Activated CD8-positive, alpha-beta T cell treated with anti-CD3 and anti-CD28 coated beads for 36 hours (primary cell): ENCODE measurements at regions of chr17 and their contacts with region 1.

Region 1: DNA sequence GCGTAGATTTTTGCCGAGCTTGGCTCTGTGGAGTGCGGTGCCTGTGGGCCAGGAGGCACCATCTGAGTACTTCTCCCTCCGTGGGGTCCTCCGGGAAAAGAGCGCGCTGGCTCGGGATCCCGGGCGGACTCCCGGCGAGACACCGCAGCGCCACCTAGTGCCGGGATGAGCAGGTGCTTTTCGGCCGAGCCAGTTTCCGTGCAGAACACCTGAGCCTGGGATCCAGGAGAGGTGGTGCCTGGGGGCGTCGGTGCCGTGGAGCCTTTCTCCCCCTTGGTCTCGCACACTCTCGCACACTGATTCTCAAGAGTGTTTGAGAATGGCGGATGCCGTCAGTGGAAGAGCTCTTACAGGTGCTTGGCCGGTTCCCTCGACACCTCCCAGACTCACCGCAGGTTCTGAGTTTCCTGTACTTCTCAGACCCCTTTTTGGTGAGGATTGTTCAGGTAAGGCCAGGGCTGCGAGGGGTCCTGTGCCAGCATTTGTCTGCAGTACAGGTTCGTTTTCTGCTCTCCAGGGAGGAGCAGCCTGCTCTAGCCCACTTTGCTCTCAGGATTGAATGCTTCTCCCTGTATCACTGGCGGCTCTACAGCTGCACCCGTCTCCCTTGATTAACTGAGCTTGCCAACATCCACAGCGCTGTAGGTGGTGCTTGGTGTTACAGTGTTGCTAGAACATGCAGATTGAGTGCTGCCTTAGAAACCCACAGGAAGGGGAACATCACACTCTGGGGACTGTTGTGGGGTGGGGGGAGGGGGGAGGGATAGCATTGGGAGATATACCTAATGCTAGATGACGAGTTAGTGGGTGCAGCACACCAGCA is 23.3 kb downstream of the TBCD start:
- DNase-seq: peak; percentile 53
- ATAC-seq: peak; percentile 61
- H3K4me3 Mint-ChIP-seq: no peak overlapping the region
- H3K27ac Mint-ChIP-seq: no peak overlapping the region
- H3K4me1 Mint-ChIP-seq: peaks cover 21% of the 10 kb centered on the region
- H3K27me3 Mint-ChIP-seq: no peaks in the 10 kb centered on the region
- CTCF ChIP-seq: peak; percentile 94

Region 2: DNA sequence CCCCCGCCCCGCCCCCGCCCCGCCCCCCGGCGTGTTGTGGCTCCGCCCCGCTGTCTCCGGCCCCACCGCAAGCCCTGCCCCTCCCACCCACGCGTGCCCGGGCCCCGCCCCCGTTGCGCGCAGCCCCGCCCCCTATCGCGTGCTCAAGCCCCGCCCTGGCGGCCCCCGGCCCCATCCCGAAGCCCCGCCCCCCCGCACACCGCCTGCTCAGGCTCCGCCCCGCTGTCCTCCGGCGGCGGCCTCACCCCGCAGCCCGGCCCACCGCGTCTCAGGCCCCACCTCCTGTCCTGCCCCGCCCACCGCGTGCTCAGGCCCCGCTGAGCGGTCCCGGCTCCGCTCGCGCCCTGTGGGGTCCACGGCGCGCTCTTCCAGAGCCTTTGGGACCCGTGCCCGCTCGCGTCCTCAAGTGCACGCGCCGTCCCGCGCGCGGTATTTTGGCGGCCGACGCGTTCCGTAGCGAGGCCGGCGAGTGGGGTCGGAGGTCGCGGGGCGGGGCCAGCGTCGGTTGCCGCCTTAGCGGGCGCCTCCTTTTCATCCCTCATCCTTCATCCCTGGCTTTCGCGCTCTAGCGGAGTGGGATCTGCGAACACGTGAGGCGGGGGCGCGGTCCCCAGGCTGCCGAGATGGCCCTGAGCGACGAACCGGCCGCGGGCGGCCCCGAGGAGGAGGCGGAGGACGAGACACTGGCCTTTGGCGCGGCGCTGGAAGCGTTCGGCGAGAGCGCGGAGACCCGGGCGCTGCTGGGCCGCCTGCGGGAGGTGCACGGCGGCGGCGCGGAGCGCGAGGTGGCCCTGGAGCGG is 23.4 kb before region 1 on chr17 and contains the start of gene TBCD:
- CTCF ChIA-PET with region 1: interaction called, 12 read pairs
- POLR2A ChIA-PET with region 1: no interaction called
- intact Hi-C with region 1: no loop called
- DNase-seq: peak; percentile 89
- ATAC-seq: peak; percentile 91
- H3K4me3 Mint-ChIP-seq: peak within 1 kb of the TSS; percentile 86
- H3K27ac Mint-ChIP-seq: peak within 1 kb of the TSS; percentile 61
- H3K4me1 Mint-ChIP-seq: peaks cover 23% of the 10 kb centered on the region
- H3K27me3 Mint-ChIP-seq: no peaks in the 10 kb centered on the region
- CTCF ChIP-seq: no peak
- total RNA-seq, gene TBCD: 77.8 to 85.8 TPM